ENCODE measurements at regions of chr5 and their contacts with region 1.

Region 1: DNA sequence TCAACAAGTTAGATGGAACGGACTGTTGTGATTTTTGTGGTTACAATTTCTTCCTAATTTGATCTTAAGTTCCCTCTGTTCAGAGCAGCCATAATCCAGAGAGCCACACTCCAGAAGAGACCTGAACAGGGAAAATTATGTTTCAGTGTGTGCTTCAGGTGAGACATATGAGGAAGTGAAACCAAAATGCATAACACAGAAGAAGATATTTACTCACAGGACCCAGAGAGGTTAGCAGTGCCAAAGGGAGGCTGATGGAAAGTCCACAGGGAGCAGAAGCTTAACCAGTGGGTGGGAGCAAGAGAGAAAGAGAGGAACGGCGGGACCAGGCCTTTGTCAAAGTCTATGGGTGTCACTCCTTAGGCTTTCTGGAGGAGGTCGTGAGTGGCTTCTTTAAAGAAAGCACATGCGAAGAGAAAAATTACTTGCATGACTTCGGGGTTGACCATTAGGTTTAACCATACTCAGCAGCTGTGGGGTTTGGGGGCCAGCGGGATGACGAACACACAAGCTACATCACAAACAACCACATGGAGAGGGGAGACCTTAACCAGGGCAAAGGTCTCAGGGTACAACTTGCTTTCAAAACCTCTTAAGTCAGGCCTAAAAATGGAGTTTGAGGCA is 141.4 kb downstream of the MED10 start:
- DNase-seq: no peak
- H3K4me3 ChIP-seq: no peak overlapping the region
- H3K27ac ChIP-seq: no peak overlapping the region
- H3K4me1 ChIP-seq: no peaks in the 10 kb centered on the region
- H3K27me3 ChIP-seq: no peaks in the 10 kb centered on the region
- CTCF ChIP-seq: no peak

Region 2: GRCh38 chr5:6158974-6159861 is 77.8 kb before region 1 on chr5:
- CTCF ChIA-PET with region 1: no interaction called
- dilution Hi-C with region 1: loop called (anchors 5 kb)
- in situ Hi-C with region 1: no loop called
- intact Hi-C with region 1: no loop called
- DNase-seq: peak; percentile 87
- H3K4me3 ChIP-seq: peak overlapping the region; percentile 5 to 23 (median 20)
- H3K27ac ChIP-seq: peak overlapping the region; percentile 73
- H3K4me1 ChIP-seq: peaks cover 15% of the 10 kb centered on the region
- H3K27me3 ChIP-seq: no peaks in the 10 kb centered on the region
- CTCF ChIP-seq: no peak

Measured in mammary epithelial cell (primary cell).